ENCODE measurements at regions of chr12 and their contacts with region 1.

Region 1: DNA sequence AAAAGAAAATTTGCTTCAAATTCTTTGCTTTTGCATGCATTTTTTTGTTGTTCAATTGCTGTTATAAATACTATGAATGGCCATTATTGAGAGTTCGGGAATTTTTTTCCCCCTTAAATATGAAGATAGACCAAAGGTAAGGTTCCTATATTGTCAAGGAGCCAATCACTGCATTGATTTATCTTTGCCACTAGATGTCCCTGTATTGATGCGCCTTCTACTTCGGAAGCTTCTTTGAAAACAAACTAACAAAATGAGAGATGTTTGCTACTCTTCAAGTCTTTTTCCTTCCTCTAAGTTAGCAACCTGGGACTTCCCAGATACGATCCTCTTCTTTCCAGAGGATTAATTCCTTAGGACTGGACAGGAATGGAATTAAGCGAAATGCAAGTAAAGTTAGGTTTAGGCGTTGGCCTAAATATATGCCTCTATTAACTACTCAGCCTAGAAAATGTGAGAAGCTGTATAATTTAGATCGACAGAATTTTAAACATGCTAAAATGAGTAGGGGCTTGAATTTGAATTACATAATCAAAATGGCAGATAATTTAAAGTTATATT is 318.1 kb downstream of the AEBP2 start:
- DNase-seq: peak; percentile 64
- H3K4me3 ChIP-seq: no peak overlapping the region
- H3K27ac ChIP-seq: no peak overlapping the region
- H3K4me1 ChIP-seq: peaks cover 3% of the 10 kb centered on the region
- H3K27me3 ChIP-seq: no peaks in the 10 kb centered on the region
- CTCF ChIP-seq: peak; percentile 46 to 56
- POLR2A ChIP-seq: no peak

Region 2: GRCh38 chr12:19597167-19598026 is 160.0 kb before region 1 on chr12:
- CTCF ChIA-PET with region 1: no interaction called
- POLR2A ChIA-PET with region 1: no interaction called
- dilution Hi-C with region 1: no loop called
- intact Hi-C with region 1: no loop called
- DNase-seq: no peak
- H3K4me3 ChIP-seq: no peak overlapping the region
- H3K27ac ChIP-seq: no peak overlapping the region
- H3K4me1 ChIP-seq: no peaks in the 10 kb centered on the region
- H3K27me3 ChIP-seq: no peaks in the 10 kb centered on the region
- CTCF ChIP-seq: no peak
- POLR2A ChIP-seq: no peak

Region 3: GRCh38 chr12:19779393-19780056 is 22.1 kb after region 1 on chr12:
- CTCF ChIA-PET with region 1: interaction called, 13 read pairs
- POLR2A ChIA-PET with region 1: no interaction called
- dilution Hi-C with region 1: no loop called
- intact Hi-C with region 1: no loop called
- DNase-seq: no peak
- H3K4me3 ChIP-seq: no peak overlapping the region
- H3K27ac ChIP-seq: no peak overlapping the region
- H3K4me1 ChIP-seq: peaks cover 12% of the 10 kb centered on the region
- H3K27me3 ChIP-seq: no peaks in the 10 kb centered on the region
- CTCF ChIP-seq: no peak
- POLR2A ChIP-seq: no peak

Region 4: GRCh38 chr12:19893514-19893913 is 136.1 kb after region 1 on chr12:
- CTCF ChIA-PET with region 1: interaction called, 32 read pairs
- POLR2A ChIA-PET with region 1: no interaction called
- dilution Hi-C with region 1: no loop called
- intact Hi-C with region 1: loop called (anchors 5 kb)
- DNase-seq: peak; percentile 31
- H3K4me3 ChIP-seq: no peak overlapping the region
- H3K27ac ChIP-seq: no peak overlapping the region
- H3K4me1 ChIP-seq: peaks cover 7% of the 10 kb centered on the region
- H3K27me3 ChIP-seq: no peaks in the 10 kb centered on the region
- CTCF ChIP-seq: no peak
- POLR2A ChIP-seq: no peak

Region 5: DNA sequence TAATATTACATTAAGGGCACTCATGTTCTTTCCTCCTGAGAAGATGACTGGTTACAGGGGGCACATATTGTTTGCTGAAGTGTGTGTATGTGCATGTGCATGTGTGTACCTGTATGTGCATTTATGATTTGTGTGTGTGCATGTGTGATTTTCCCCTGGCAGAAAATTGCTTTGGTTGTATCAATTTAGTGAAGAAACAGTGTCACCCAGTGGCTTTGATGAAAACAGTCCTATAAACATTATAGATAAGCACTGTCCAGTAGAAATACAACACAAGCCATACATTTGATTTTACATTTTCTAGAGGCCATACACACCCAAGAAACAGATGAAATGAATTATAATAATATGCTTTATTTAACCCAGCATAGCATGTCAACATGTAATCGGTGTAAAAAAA is 619.6 kb after region 1 on chr12:
- CTCF ChIA-PET with region 1: interaction called, 8 read pairs
- POLR2A ChIA-PET with region 1: no interaction called
- dilution Hi-C with region 1: no loop called
- intact Hi-C with region 1: loop called (anchors 5 kb)
- DNase-seq: peak; percentile 60
- H3K4me3 ChIP-seq: no peak overlapping the region
- H3K27ac ChIP-seq: no peak overlapping the region
- H3K4me1 ChIP-seq: peaks cover 37% of the 10 kb centered on the region
- H3K27me3 ChIP-seq: no peaks in the 10 kb centered on the region
- CTCF ChIP-seq: peak; percentile 22 to 35
- POLR2A ChIP-seq: no peak

Region 6: GRCh38 chr12:20624718-20625117 is 867.3 kb after region 1 on chr12:
- CTCF ChIA-PET with region 1: interaction called, 12 read pairs
- POLR2A ChIA-PET with region 1: no interaction called
- dilution Hi-C with region 1: no loop called
- intact Hi-C with region 1: no loop called
- DNase-seq: peak; percentile 58
- H3K4me3 ChIP-seq: no peak overlapping the region
- H3K27ac ChIP-seq: no peak overlapping the region
- H3K4me1 ChIP-seq: peaks cover 11% of the 10 kb centered on the region
- H3K27me3 ChIP-seq: no peaks in the 10 kb centered on the region
- CTCF ChIP-seq: peak; percentile 32 to 46
- POLR2A ChIP-seq: no peak

Measured in endothelial cell of umbilical vein (primary cell).